ENCODE measurements at regions of chr10 and their contacts with region 1.

Region 1: DNA sequence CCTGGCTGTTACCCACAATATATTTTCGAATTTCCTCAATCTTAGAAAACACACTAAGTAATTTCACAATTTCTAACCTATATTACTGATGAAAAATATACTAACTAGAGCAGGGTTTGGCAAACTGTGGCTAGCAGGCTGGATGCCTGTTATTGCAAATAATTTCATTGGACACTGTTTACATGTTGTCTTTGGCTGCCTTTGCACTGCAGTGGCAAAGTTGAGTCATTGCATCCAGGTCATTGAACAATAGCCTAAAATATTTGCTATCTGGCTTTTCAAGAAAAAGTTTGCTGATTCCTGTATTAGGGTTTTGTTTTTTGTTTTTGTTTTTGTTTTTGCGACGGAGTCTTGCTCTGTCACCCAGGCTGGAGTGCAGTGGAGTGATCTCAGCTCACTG is 47.2 kb downstream of the KIF11 start:
- DNase-seq: no peak

Region 2: DNA sequence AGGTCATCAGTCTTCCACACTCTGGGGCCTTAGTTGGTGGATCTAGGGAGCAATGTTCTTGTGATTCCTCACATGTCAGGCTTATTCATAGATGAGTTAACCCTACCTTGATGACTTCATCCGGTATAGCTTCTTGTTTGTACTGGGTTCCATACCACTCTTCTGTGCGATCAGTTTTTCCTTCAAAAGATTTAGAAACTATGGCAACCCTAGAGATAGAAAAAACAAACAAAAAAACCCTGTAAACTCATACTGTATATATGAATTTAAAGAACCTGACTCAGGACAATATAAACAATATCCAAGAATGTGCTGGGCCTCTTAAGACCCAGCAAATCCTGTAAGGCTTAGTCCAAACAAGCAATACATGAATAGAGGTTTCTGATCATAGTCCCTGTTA is 149.7 kb before region 1 on chr10:
- in situ Hi-C with region 1: no loop called
- DNase-seq: no peak

Region 3: GRCh38 chr10:92592761-92593618 is 47.1 kb before region 1 on chr10 and contains the start of gene KIF11:
- in situ Hi-C with region 1: loop called (anchors 10 kb)
- DNase-seq: peak; percentile 97
- total RNA-seq, gene KIF11: 18.6 and 39.8 TPM in 2 replicates